SK-N-SH (cell line): ENCODE measurements at regions of chr6 and their contacts with region 1.

Region 1: DNA sequence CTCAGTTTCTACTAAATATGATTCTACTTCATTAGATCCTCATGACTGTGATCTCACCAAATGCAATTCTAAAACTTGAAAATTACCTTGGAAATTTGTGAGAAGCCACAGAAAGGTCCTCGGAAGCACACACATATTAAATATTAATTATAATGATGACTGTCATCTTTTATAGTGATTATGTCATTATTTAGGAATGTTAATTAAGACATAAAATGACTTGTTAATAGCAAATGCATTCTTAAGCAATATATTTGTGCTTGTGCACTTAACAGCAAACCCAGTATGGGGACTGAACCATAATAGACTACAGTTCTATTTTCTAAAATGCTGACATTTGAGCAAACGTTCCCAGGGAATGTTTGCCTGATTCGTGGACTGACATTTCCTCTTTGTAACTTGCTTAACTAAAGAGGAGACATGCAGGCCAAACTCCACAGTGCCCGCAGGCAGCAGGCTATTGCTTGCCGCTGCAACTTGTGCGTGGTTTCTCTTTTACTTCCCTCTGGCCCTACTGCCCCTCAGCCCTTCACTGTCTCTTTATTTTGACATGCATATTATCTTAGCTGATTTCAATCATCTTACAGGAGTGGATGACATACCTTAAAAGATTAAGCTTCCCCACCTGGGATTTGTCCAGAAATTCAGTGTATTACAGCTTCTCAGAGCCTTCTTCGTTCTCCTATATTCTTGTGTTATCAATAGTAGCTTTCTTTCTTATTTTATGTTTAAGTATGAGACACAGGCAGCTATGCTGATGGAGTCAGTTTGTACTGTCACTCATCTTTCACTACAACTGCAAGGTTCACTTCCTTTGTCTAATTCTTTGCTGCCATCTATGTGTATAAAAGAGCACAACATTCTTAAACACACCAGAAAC is 141.5 kb downstream of the GMDS start:
- DNase-seq: peak; percentile 58
- H3K4me3 ChIP-seq: peak overlapping the region; percentile 24 to 44; a peak in 2 of 4 replicates
- H3K27ac ChIP-seq: peak overlapping the region; percentile 28 to 43; a peak in 2 of 4 replicates
- H3K4me1 ChIP-seq: peaks cover 7 to 13% of the 10 kb centered on the region in 2 experiments; a peak in 2 of 4 replicates
- H3K27me3 ChIP-seq: no peaks in the 10 kb centered on the region
- CTCF ChIP-seq: peak; percentile 77
- EP300 ChIP-seq: no peak
- RAD21 ChIP-seq: peak; percentile 97

Region 2: GRCh38 chr6:1162367-1163275 is 941.3 kb before region 1 on chr6:
- CTCF ChIA-PET with region 1: no interaction called
- POLR2A ChIA-PET with region 1: no interaction called
- DNase-seq: no peak
- H3K4me3 ChIP-seq: peak overlapping the region; percentile 12 to 50; a peak in 2 of 4 replicates
- H3K27ac ChIP-seq: no peak overlapping the region
- H3K4me1 ChIP-seq: no peaks in the 10 kb centered on the region
- H3K27me3 ChIP-seq: peaks cover 11% of the 10 kb centered on the region; the same call in 1 of the 2 replicates
- CTCF ChIP-seq: no peak
- EP300 ChIP-seq: no peak
- RAD21 ChIP-seq: no peak

Region 3: GRCh38 chr6:1609648-1610496 is 494.0 kb before region 1 on chr6 and contains the start of gene FOXC1:
- CTCF ChIA-PET with region 1: interaction called, 60 read pairs
- POLR2A ChIA-PET with region 1: no interaction called
- DNase-seq: peak; percentile 97
- H3K4me3 ChIP-seq: peak within 1 kb of the TSS; percentile 70 to 79
- H3K27ac ChIP-seq: peak within 1 kb of the TSS; percentile 72 to 90
- H3K4me1 ChIP-seq: peaks cover 0 to 6% of the 10 kb centered on the region in 2 experiments; a peak in 1 of 4 replicates
- H3K27me3 ChIP-seq: no peaks in the 10 kb centered on the region
- CTCF ChIP-seq: no peak
- EP300 ChIP-seq: no peak
- RAD21 ChIP-seq: no peak
- polyA plus RNA-seq, gene FOXC1: 3.6 and 4.3 TPM in 2 replicates

Region 4: GRCh38 chr6:1821513-1822183 is 282.2 kb before region 1 on chr6:
- CTCF ChIA-PET with region 1: interaction called, 14 read pairs
- POLR2A ChIA-PET with region 1: no interaction called
- DNase-seq: no peak
- H3K4me3 ChIP-seq: peak overlapping the region in 1 of 2 experiments; percentile 1; a peak in 1 of 4 replicates
- H3K27ac ChIP-seq: peak overlapping the region; percentile 32 to 50; a peak in 2 of 4 replicates
- H3K4me1 ChIP-seq: peaks cover 7 to 18% of the 10 kb centered on the region in 2 experiments; a peak in 3 of 4 replicates
- H3K27me3 ChIP-seq: no peaks in the 10 kb centered on the region
- CTCF ChIP-seq: no peak
- EP300 ChIP-seq: no peak
- RAD21 ChIP-seq: no peak

Region 5: DNA sequence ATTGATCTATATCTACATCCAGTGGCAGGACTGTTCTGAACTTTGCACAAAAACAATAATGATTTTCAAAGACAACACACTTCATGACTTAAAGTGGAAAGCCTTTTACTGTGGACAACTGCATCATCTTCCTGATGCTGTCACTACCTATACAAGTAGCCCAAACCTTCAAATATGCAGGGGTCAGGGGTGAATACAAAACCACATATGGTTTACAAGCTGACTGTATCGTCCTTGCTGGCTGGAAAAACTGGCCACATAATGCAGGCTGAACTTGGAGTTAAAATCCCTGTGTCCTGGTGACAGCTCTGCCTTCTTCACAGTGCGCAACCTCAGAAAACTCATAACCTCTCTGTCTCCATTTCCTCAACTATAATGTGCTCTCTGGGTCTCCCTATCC is 12.6 kb after region 1 on chr6:
- CTCF ChIA-PET with region 1: interaction called, 15 read pairs
- POLR2A ChIA-PET with region 1: no interaction called
- DNase-seq: no peak
- H3K4me3 ChIP-seq: no peak overlapping the region
- H3K27ac ChIP-seq: no peak overlapping the region
- H3K4me1 ChIP-seq: no peaks in the 10 kb centered on the region; a peak in 1 of 4 replicates
- H3K27me3 ChIP-seq: no peaks in the 10 kb centered on the region
- CTCF ChIP-seq: no peak
- EP300 ChIP-seq: no peak
- RAD21 ChIP-seq: no peak

Region 6: DNA sequence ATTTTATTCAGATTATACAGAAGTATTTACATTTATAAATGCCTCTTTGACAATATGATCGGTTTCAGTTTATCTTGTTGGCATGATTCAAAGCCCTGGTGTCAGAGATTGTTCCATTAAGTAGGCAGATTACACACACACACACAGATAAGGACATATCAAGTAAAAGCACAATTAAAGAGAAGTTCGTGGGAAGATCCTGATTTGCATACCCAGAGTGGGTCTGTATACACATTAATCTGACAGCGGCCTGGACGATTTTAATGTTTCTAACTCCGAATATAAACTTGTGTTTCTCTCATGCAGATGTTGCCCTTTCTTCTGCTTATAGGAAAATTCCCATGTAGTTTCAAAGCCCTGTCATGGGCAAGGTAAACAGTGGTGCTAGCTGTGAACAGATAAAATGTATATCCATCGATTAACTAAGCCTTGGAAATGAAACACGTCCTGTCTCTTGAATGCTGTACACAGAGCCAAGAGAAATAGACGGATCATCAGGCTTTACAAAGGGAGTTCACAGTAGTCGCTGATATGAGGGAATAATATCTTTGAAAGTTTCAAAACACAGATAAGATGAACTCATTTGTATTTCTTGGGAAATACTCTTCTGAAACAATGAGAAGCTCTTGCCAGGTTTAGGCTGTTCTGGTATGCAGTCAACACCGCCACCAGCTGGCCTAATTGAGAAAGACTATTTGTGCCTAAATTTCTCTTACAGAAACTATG is 249.7 kb after region 1 on chr6:
- CTCF ChIA-PET with region 1: interaction called, 13 read pairs
- POLR2A ChIA-PET with region 1: no interaction called
- DNase-seq: peak; percentile 58
- H3K4me3 ChIP-seq: no peak overlapping the region; a peak in 1 of 4 replicates
- H3K27ac ChIP-seq: no peak overlapping the region
- H3K4me1 ChIP-seq: no peaks in the 10 kb centered on the region
- H3K27me3 ChIP-seq: no peaks in the 10 kb centered on the region
- CTCF ChIP-seq: peak; percentile 93
- EP300 ChIP-seq: no peak
- RAD21 ChIP-seq: peak; percentile 92

Region 7: DNA sequence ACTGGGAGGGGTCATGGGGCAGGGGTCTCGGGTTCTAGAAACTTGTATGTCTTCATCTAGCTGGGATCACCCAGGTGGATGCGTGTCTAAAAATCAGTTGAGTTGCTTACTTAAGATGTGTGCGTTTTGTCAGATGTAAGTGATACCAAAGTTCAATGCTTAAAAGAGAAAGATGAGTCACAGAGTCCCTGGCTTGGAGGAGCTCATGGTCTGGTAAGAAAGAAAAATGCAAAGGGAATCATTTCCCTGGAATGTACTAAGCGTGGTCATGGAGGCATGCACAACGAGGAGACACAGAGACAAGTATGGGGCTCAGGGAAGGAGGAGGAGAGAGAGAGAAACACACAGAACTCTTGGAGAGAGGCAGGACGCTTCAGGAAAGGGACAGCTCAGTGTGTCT is 328.4 kb after region 1 on chr6:
- CTCF ChIA-PET with region 1: no interaction called
- POLR2A ChIA-PET with region 1: no interaction called
- DNase-seq: no peak
- H3K4me3 ChIP-seq: no peak overlapping the region
- H3K27ac ChIP-seq: peak overlapping the region in 1 of 2 experiments; percentile 45; a peak in 2 of 4 replicates
- H3K4me1 ChIP-seq: peaks cover 0 to 8% of the 10 kb centered on the region in 2 experiments; a peak in 2 of 4 replicates
- H3K27me3 ChIP-seq: no peaks in the 10 kb centered on the region
- CTCF ChIP-seq: no peak
- EP300 ChIP-seq: no peak
- RAD21 ChIP-seq: no peak